ENCODE measurements at regions of chr5 and their contacts with region 1.

Region 1: GRCh38 chr5:14142827-14143548 is at the start of gene TRIO:
- DNase-seq: peak; percentile 91
- H3K4me3 Mint-ChIP-seq: peak within 1 kb of the TSS; percentile 89
- H3K27ac Mint-ChIP-seq: peak within 1 kb of the TSS; percentile 62
- H3K4me1 Mint-ChIP-seq: peaks cover 23% of the 10 kb centered on the region
- H3K27me3 Mint-ChIP-seq: peaks cover 12% of the 10 kb centered on the region
- CTCF ChIP-seq: peak; percentile 60
- total RNA-seq, gene TRIO: 134 and 136 TPM in 2 replicates

Region 2: GRCh38 chr5:13987843-13988464 is 155.0 kb before region 1 on chr5:
- CTCF ChIA-PET with region 1: interaction called, 6 read pairs
- POLR2A ChIA-PET with region 1: no interaction called
- intact Hi-C with region 1: loop called (anchors 1 kb)
- DNase-seq: peak; percentile 75
- H3K4me3 Mint-ChIP-seq: no peak overlapping the region
- H3K27ac Mint-ChIP-seq: no peak overlapping the region
- H3K4me1 Mint-ChIP-seq: peaks cover 7% of the 10 kb centered on the region
- H3K27me3 Mint-ChIP-seq: no peaks in the 10 kb centered on the region
- CTCF ChIP-seq: peak; percentile 88

Region 3: GRCh38 chr5:14035859-14036440 is 107.0 kb before region 1 on chr5:
- CTCF ChIA-PET with region 1: no interaction called
- POLR2A ChIA-PET with region 1: no interaction called
- intact Hi-C with region 1: loop called (anchors 5 kb)
- DNase-seq: peak; percentile 91
- H3K4me3 Mint-ChIP-seq: peak overlapping the region; percentile 62
- H3K27ac Mint-ChIP-seq: peak overlapping the region; percentile 65
- H3K4me1 Mint-ChIP-seq: peaks cover 33% of the 10 kb centered on the region
- H3K27me3 Mint-ChIP-seq: no peaks in the 10 kb centered on the region
- CTCF ChIP-seq: no peak

Region 4: GRCh38 chr5:14190194-14191164 is 47.5 kb after region 1 on chr5:
- CTCF ChIA-PET with region 1: interaction called, 8 read pairs
- POLR2A ChIA-PET with region 1: interaction called, 37 read pairs
- intact Hi-C with region 1: loop called (anchors 2 kb)
- DNase-seq: peak; percentile 87
- H3K4me3 Mint-ChIP-seq: peak overlapping the region; percentile 73
- H3K27ac Mint-ChIP-seq: peak overlapping the region; percentile 98
- H3K4me1 Mint-ChIP-seq: peaks cover 56% of the 10 kb centered on the region
- H3K27me3 Mint-ChIP-seq: no peaks in the 10 kb centered on the region
- CTCF ChIP-seq: no peak

Region 5: DNA sequence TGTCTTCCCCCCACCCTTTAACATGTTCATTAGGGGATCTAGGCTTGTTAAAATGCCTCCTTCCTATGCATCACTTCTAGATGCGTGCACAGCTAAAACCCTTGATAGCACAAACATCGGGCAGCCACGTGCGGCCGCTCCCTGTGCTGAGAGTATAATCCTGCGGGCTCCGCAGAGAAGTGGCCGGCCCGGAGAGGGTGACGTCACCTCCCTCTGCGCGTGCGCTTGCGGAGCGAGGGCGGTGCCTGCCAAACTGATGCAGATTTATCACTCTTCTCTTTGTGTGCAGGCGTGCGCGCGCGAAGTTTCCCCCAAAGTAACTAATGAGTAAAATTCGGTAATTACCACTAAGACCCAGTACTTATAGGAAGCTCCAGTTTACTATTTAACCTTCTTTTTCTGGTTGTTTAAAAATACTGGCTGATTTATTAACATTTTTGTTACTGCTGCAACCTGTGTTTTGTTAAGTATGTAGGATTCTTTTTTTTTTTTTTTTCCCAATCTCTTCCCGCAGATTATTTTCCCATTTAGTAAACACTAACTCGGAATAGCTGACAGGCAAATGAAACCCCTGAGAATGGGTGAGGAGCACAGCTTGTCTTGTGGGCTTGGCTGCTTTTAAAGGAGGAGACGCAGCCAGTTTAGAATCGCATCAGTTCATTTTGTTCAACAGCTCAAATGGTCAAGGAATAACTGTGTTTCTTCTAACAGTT is 121.8 kb after region 1 on chr5:
- CTCF ChIA-PET with region 1: interaction called, 13 read pairs
- POLR2A ChIA-PET with region 1: interaction called, 128 read pairs
- intact Hi-C with region 1: no loop called
- DNase-seq: peak; percentile 93
- H3K4me3 Mint-ChIP-seq: peak overlapping the region; percentile 74
- H3K27ac Mint-ChIP-seq: peak overlapping the region; percentile 52
- H3K4me1 Mint-ChIP-seq: peaks cover 53% of the 10 kb centered on the region
- H3K27me3 Mint-ChIP-seq: no peaks in the 10 kb centered on the region
- CTCF ChIP-seq: no peak